ENCODE measurements at regions of chr11 and their contacts with region 1.

Region 1: GRCh38 chr11:18105802-18106574 is at the start of gene SAAL1:
- DNase-seq: peak; percentile 74 to 97 (median 86)
- ATAC-seq: peak; percentile 99
- H3K4me3 ChIP-seq: peak within 1 kb of the TSS; percentile 84 to 98
- H3K27ac ChIP-seq: peak within 1 kb of the TSS in 1 of 2 donors; percentile 48
- H3K4me1 ChIP-seq: peaks cover 14 to 15% of the 10 kb centered on the region in 2 donors
- H3K27me3 ChIP-seq: peaks cover 0 to 15% of the 10 kb centered on the region in 2 donors
- CTCF ChIP-seq: peak; percentile 57 to 67
- polyA plus RNA-seq, gene SAAL1: 33.9 to 48.3 (median 37.5) TPM

Region 2: GRCh38 chr11:18012863-18013781 is 92.9 kb before region 1 on chr11 and contains the start of gene SERGEF:
- intact Hi-C with region 1: loop called in 1 of 2 experiments (anchors 10 kb)
- DNase-seq: peak; percentile 67 to 100 (median 93)
- ATAC-seq: peak; percentile 99
- H3K4me3 ChIP-seq: peak within 1 kb of the TSS; percentile 69
- H3K27ac ChIP-seq: peak within 1 kb of the TSS; percentile 74 to 86
- H3K4me1 ChIP-seq: peaks cover 0 to 15% of the 10 kb centered on the region in 2 donors
- H3K27me3 ChIP-seq: no peaks in the 10 kb centered on the region
- CTCF ChIP-seq: peak in 1 of 2 donors; percentile 46
- polyA plus RNA-seq, gene SERGEF: 16.2 to 21.4 (median 18.9) TPM

Region 3: DNA sequence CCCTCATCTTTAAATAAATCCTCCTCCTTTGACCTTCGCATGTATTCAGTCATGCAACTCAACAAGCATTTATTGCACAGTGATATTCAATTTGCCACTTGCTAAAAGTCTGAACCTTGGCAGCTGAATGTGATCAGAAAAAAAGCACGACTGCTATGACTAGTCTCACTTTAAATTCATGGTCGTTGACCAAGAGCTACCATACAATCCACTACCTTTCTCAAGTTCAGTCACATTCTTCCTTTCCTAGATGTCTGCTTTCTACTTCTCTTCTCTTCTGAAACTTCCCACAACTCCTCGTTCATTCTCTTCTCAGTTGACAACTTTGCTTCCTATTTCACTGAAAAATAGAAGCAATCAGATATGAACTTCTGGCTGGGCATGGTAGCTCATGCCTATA is 158.0 kb after region 1 on chr11:
- intact Hi-C with region 1: no loop called
- DNase-seq: no peak
- ATAC-seq: no peak
- H3K4me3 ChIP-seq: no peak overlapping the region
- H3K27ac ChIP-seq: no peak overlapping the region
- H3K4me1 ChIP-seq: peaks cover 0 to 10% of the 10 kb centered on the region in 2 donors
- H3K27me3 ChIP-seq: no peaks in the 10 kb centered on the region
- CTCF ChIP-seq: no peak